Activated B cell treated with CpG ODN at 0.5 μM for 24 hours (primary cell): ENCODE measurements at regions of chr4 and their contacts with region 1.

Region 1: GRCh38 chr4:112523764-112524505 is 8.0 kb upstream of the NEUROG2 start:
- DNase-seq: peak; percentile 79
- ATAC-seq: peak; percentile 88
- H3K4me3 Mint-ChIP-seq: peak overlapping the region; percentile 88
- H3K27ac Mint-ChIP-seq: no peak overlapping the region
- H3K4me1 Mint-ChIP-seq: peaks cover 32% of the 10 kb centered on the region
- H3K27me3 Mint-ChIP-seq: peaks cover 48% of the 10 kb centered on the region
- CTCF ChIP-seq: peak; percentile 12

Region 2: GRCh38 chr4:112099701-112100297 is 424.1 kb before region 1 on chr4:
- CTCF ChIA-PET with region 1: interaction called, 60 read pairs
- POLR2A ChIA-PET with region 1: no interaction called
- intact Hi-C with region 1: loop called (anchors 1 kb)
- DNase-seq: no peak
- ATAC-seq: peak; percentile 50
- H3K4me3 Mint-ChIP-seq: no peak overlapping the region
- H3K27ac Mint-ChIP-seq: no peak overlapping the region
- H3K4me1 Mint-ChIP-seq: no peaks in the 10 kb centered on the region
- H3K27me3 Mint-ChIP-seq: no peaks in the 10 kb centered on the region
- CTCF ChIP-seq: peak; percentile 52

Region 3: DNA sequence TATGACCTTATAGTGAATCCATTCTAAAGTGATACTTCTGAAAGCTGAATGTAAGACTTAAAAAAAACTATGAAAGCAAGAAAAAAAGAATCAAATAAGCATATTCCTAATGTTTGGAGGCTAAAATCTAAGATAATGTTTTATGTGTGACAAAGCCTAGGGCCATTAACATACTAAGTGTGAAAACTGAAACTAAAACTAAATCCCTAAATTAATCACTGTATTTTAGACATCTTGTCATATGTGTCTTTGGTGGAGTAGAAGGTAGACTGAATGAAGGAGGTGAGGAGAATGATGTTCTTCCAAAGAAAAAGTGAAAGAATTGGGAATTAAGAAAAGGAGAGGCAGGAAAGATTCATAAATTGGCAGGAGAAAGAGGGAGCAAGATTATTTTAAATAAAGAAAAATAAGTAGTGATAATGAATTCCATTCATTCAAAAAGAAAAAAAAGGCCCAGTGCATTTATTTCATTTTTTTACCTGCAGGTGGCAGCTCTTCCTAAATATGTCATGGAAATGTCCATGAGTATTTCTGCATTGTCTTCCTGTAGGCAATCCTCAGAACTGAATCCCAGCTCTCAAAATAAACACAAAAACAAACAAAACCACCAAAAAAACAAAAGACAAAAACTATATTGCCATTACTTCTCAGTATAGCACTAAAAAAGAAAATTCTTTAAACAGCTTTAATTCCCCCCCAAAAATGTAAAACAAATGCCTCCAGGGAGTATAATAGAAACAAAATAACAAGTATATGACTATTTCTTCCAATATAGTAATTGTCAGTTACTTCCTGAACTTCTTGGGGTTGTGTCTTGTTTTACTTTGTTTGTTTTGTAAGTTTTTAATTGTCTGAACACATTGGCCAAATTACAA is 309.3 kb before region 1 on chr4:
- CTCF ChIA-PET with region 1: interaction called, 33 read pairs
- POLR2A ChIA-PET with region 1: interaction called, 3 read pairs
- intact Hi-C with region 1: loop called (anchors 1 kb)
- DNase-seq: no peak
- ATAC-seq: no peak
- H3K4me3 Mint-ChIP-seq: no peak overlapping the region
- H3K27ac Mint-ChIP-seq: no peak overlapping the region
- H3K4me1 Mint-ChIP-seq: no peaks in the 10 kb centered on the region
- H3K27me3 Mint-ChIP-seq: no peaks in the 10 kb centered on the region
- CTCF ChIP-seq: peak; percentile 17

Region 4: DNA sequence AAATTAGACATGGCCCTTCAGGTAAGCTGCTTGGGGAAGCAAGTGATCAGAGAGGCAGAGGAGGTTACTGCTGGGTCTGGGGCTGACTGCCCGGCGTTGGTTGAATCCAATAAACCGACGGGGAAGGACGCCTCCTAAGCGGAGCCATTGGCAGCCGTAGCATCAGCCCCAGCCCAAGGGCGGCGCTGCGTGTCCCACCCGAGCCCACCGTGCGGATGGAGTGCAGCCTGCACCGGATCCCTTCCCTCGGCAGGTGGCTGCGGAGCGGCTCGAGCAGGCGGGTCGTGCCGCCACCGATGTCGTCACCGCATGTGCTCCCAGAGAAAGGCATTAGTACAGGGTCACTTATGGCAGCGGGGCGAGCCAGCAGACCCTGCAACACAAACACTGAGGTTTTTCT is 144.6 kb before region 1 on chr4:
- CTCF ChIA-PET with region 1: interaction called, 4 read pairs
- POLR2A ChIA-PET with region 1: interaction called, 4 read pairs
- intact Hi-C with region 1: loop called (anchors 5 kb)
- DNase-seq: no peak
- ATAC-seq: no peak
- H3K4me3 Mint-ChIP-seq: no peak overlapping the region
- H3K27ac Mint-ChIP-seq: no peak overlapping the region
- H3K4me1 Mint-ChIP-seq: peaks cover 32% of the 10 kb centered on the region
- H3K27me3 Mint-ChIP-seq: no peaks in the 10 kb centered on the region
- CTCF ChIP-seq: no peak

Region 5: GRCh38 chr4:112604589-112604988 is 80.7 kb after region 1 on chr4:
- CTCF ChIA-PET with region 1: interaction called, 6 read pairs
- POLR2A ChIA-PET with region 1: no interaction called
- intact Hi-C with region 1: loop called (anchors 2 kb)
- DNase-seq: no peak
- ATAC-seq: no peak
- H3K4me3 Mint-ChIP-seq: no peak overlapping the region
- H3K27ac Mint-ChIP-seq: no peak overlapping the region
- H3K4me1 Mint-ChIP-seq: no peaks in the 10 kb centered on the region
- H3K27me3 Mint-ChIP-seq: no peaks in the 10 kb centered on the region
- CTCF ChIP-seq: peak; percentile 84

Region 6: DNA sequence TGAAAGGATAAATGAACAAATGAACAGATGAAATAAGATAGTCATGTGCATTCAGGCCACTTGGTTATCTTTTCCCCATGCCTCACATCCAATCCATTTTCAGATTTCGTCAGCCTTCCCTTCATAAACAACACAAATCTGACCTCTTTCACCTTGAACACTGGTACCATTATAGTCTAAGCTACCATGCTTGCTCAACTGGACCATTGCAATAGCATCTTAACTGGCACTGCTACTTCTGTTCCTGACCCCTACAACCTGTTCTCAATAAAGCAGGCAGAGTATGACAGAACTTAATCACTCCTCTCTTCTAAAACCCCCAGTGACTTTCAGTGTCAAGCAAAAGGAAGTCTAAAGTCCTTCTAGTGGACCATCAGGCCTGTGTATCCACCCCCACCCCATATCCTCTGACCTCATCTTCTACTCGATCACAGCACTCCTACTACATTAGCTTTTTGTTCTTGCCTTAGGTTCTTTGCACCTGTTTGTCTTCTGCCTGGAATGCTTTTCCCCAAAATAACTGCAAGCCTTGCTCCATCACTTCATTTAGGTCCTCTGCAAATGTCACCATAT is 153.7 kb after region 1 on chr4:
- CTCF ChIA-PET with region 1: no interaction called
- POLR2A ChIA-PET with region 1: no interaction called
- intact Hi-C with region 1: no loop called
- DNase-seq: no peak
- ATAC-seq: no peak
- H3K4me3 Mint-ChIP-seq: no peak overlapping the region
- H3K27ac Mint-ChIP-seq: no peak overlapping the region
- H3K4me1 Mint-ChIP-seq: no peaks in the 10 kb centered on the region
- H3K27me3 Mint-ChIP-seq: no peaks in the 10 kb centered on the region
- CTCF ChIP-seq: no peak

Region 7: GRCh38 chr4:112765317-112765975 is 241.5 kb after region 1 on chr4:
- CTCF ChIA-PET with region 1: no interaction called
- POLR2A ChIA-PET with region 1: interaction called, 3 read pairs
- intact Hi-C with region 1: loop called (anchors 10 kb)
- DNase-seq: no peak
- ATAC-seq: peak; percentile 54
- H3K4me3 Mint-ChIP-seq: no peak overlapping the region
- H3K27ac Mint-ChIP-seq: no peak overlapping the region
- H3K4me1 Mint-ChIP-seq: peaks cover 3% of the 10 kb centered on the region
- H3K27me3 Mint-ChIP-seq: peaks cover 4% of the 10 kb centered on the region
- CTCF ChIP-seq: no peak